GM12878 (cell line): ENCODE measurements at regions of chr16 and their contacts with region 1.

Region 1: DNA sequence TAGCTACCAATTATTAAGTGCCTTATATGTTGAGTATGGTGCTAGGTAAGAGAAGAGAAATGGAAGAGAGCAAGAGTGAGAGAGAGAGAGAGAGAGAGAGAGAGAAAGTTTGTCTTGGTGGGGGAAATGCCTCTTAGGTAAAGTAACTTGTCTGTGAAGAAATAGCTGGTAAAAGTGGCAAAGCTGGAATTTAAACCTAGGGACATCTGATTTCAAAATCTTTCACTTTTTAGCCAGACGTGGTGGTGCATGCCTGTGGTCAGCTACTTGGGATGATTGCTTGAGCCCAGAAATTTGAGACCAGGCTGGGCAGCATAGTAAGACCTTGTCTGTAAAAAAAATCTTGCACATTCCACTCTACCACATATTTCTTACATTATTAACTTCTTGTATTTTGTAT is 23.0 kb upstream of the CDR2 start:
- DNase-seq: no peak
- ATAC-seq: no peak
- H3K4me3 ChIP-seq: no peak overlapping the region
- H3K27ac ChIP-seq: no peak overlapping the region
- H3K4me1 ChIP-seq: no peaks in the 10 kb centered on the region
- H3K27me3 ChIP-seq: no peaks in the 10 kb centered on the region
- CTCF ChIP-seq: no peak
- EP300 ChIP-seq: no peak
- POLR2A ChIP-seq: no peak
- RAD21 ChIP-seq: no peak

Region 2: GRCh38 chr16:22346483-22346882 is 51.0 kb before region 1 on chr16:
- CTCF ChIA-PET with region 1: no interaction called
- POLR2A ChIA-PET with region 1: no interaction called
- RAD21 ChIA-PET with region 1: no interaction called
- SMC1A ChIA-PET with region 1: no interaction called
- in situ Hi-C with region 1: loop called (anchors 5 kb)
- intact Hi-C with region 1: no loop called
- DNase-seq: no peak
- ATAC-seq: no peak
- H3K4me3 ChIP-seq: no peak overlapping the region
- H3K27ac ChIP-seq: no peak overlapping the region
- H3K4me1 ChIP-seq: no peaks in the 10 kb centered on the region
- H3K27me3 ChIP-seq: no peaks in the 10 kb centered on the region
- CTCF ChIP-seq: no peak
- EP300 ChIP-seq: no peak
- POLR2A ChIP-seq: no peak
- RAD21 ChIP-seq: no peak